Cardiac septum (tissue), 1 donor: ENCODE measurements at regions of chr12 and their contacts with region 1.

Region 1: DNA sequence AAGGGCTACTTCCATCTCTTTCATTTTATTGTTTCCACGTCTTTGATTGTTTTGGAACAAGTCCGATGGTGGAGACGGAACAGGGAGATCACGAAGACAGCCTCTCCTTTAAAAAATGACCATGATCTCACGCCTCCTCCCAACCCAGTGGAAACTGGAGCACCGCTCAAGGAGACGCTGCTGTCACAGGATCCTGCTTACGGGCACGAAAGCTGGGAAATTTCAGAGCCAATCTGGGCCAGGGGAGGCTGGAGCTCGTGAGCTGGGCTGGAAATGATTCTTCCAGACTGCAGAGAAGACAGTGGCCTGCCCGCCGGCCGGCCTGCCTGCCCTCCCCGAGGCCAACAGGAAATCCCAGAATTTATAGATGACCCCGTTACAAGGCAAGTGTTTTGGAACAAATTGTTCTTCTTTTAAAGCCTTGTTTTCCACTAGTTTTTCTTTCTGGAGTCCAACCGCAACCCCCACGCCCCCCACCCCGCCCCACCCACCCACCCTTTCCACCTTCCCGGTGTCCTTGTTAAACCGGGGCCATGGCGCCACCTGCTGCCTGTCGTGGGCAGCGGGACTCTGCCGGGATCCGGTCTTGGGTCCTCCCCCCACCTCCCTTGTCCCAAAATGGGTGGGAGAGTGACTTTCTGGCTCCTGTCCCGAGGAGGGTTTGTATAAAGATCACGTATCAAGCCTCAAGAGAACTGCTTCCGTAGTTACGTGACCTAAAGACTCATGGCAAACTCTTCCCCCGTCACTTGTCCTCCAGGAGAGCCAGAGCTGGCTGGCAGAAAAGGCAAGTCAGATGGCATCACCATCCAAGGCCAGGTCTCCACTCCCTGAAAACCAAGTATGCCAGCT is 40.3 kb downstream of the MAP1LC3B2 start:
- DNase-seq: peak; percentile 92

Region 2: DNA sequence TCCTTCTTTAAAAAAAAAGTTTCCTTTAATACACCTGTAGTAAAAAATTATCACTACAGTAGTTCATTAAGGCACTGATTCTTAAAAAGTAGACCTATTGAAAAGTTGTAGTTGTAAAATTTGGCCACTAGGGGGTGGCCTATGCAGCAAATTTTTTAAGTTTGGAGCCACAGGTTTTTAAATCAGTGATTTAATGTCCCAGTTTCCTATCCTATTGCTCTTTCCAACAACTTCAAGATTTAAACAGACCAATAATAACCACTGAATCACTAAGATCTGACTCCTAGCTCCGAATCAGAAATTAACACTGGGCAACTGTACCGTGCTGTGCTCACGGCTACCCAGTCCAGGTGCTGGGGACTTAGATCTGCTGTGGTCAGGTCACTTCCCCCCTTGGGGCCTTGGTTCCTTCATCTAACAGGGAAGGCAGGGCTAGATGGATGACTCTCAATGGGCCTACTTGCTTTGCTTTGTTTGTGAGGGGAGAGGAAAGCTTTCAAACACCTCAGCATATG is 601.3 kb before region 1 on chr12:
- intact Hi-C with region 1: loop called (anchors 5 kb)
- DNase-seq: no peak

Region 3: GRCh38 chr12:116015525-116015924 is 584.0 kb before region 1 on chr12:
- intact Hi-C with region 1: loop called (anchors 5 kb)
- DNase-seq: no peak

Region 4: DNA sequence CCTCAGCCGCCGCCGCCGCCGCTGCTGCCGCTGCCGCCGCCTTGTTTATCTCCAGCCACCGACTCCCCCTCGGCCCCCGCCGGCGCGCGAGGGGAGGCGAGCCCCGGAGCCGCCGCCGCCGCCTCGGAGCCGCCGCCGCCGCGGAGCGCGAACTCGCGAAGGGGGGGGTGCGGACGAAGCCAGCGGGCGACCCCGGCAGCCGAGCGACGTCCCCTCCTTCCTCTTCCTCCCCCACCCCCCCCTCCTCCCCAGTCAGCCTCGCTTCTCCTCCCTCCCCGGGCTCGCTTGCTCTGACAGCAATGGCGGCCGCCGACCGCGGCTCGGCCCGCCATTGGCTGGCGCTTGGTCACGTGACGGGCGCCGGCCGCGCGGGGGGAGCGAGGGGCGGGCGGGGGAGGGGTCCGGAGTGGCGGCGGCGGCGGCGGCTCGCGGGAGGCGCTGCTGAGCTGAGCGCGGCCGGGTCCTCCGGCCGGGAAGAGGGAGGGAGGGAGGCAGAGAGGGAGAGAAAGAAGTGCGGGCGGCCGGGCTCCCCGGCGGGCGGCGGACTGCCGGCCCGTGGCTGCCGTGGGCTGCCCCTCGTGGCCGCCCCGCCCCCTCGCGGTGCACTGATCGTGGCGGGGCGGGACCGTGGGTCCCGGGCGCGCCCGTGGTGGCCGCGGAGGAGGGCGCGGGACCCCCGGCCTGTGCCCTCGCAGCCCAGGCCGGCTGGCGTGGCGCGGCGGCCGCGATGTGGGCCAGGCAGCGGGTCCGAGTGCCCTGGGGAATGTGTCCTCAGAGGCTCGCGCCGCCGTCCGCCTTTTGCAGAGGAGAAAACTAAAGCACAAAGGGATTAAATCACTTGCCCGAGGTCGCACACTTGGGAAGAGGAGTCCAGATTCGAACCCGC is 321.9 kb before region 1 on chr12 and contains the start of gene MED13L:
- intact Hi-C with region 1: loop called (anchors 5 kb)
- DNase-seq: peak; percentile 96
- total RNA-seq, gene MED13L: 74.5 TPM

Region 5: DNA sequence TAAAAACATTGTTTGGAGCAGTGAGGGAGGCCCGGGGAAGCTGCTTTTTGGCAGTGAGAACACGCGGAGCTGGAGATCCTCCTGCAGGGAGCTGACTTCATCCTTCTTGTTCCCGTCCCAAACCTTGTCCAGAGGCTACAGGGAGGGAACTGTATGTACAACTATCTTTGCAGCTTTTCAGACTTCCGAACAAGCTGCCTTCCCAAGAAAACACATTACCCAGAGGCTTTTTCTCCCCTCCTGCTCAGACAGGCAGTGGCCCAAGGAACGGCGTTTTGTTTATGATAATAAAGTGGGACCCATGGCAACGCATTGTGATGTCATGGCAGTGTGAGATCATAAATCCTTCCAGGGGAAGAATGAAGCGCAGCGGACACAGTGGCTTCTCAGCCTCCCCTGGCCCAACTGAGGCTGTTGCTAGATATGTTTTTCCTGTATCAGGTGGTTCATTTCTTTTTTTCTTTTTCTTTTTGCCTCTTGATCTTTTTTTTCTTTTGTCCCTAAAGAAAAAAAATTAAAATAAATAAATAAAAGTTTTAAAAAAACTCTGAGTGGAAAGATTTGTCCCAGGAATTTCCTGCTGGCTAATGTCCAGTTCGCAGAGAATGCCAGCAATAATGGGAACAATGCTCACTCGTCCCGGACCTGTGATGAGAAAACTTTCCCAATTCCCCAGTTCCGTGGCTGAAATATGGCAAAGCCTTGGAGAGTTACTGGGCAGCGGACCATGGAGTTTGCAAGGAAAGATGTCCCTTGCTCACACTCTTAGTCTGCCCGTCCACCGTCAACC is 143.8 kb before region 1 on chr12:
- intact Hi-C with region 1: loop called (anchors 10 kb)
- DNase-seq: peak; percentile 79

Region 6: GRCh38 chr12:116547955-116548501 is 51.5 kb before region 1 on chr12:
- intact Hi-C with region 1: no loop called
- DNase-seq: no peak

Region 7: DNA sequence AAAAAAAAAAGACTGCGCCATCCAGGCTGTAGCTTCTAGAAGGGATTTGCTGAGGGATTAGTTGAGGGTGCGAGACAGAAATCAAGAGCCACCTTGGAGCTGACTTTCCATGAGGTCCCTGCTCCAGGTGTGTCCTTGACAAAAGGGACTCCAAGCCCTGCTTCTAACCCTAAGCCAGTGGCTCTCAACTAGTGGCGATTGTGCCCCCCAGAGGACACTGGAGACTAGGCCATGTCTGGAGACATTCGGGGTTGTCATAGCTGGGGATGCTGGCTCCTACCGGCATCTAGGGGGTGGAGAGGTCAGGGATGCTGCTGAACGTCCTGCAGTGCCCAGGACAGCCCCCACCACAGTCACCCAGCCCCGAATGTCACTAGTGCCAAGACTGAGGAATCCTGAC is 97.8 kb after region 1 on chr12:
- intact Hi-C with region 1: loop called (anchors 10 kb)
- DNase-seq: no peak